ENCODE measurements at regions of chr11 and their contacts with region 1.

Region 1: GRCh38 chr11:57667736-57668435 is at the start of gene ZDHHC5:
- DNase-seq: peak; percentile 99 to 100 (median 100)
- H3K4me3 ChIP-seq: peak within 1 kb of the TSS; percentile 75 to 93
- H3K4me3 Mint-ChIP-seq: peak within 1 kb of the TSS; percentile 88 to 99 (median 96)
- H3K27ac ChIP-seq: peak within 1 kb of the TSS; percentile 91
- H3K27ac Mint-ChIP-seq: peak within 1 kb of the TSS; percentile 98 to 100 (median 99)
- H3K4me1 ChIP-seq: peaks cover 46% of the 10 kb centered on the region
- H3K4me1 Mint-ChIP-seq: peaks cover 33 to 67% (median 45%) of the 10 kb centered on the region in 4 donors
- H3K27me3 ChIP-seq: no peaks in the 10 kb centered on the region
- H3K27me3 Mint-ChIP-seq: peaks cover 0 to 5% of the 10 kb centered on the region in 2 donors
- total RNA-seq, gene ZDHHC5: 73.2 to 75.8 TPM

Region 2: GRCh38 chr11:57567515-57568329 is 100.2 kb before region 1 on chr11 and contains the start of gene UBE2L6:
- CTCF ChIA-PET with region 1: interaction called, 8 read pairs
- POLR2A ChIA-PET with region 1: interaction called, 5 read pairs
- intact Hi-C with region 1: loop called (anchors 1 kb)
- DNase-seq: peak; percentile 59 to 86 (median 66)
- H3K4me3 ChIP-seq: peak within 1 kb of the TSS; percentile 72 to 81
- H3K4me3 Mint-ChIP-seq: peak within 1 kb of the TSS; percentile 94 to 100 (median 99)
- H3K27ac ChIP-seq: peak within 1 kb of the TSS; percentile 93
- H3K27ac Mint-ChIP-seq: peak within 1 kb of the TSS; percentile 97 to 99 (median 98)
- H3K4me1 ChIP-seq: peaks cover 34% of the 10 kb centered on the region
- H3K4me1 Mint-ChIP-seq: peaks cover 27 to 65% (median 42%) of the 10 kb centered on the region in 4 donors
- H3K27me3 ChIP-seq: no peaks in the 10 kb centered on the region
- H3K27me3 Mint-ChIP-seq: no peaks in the 10 kb centered on the region
- total RNA-seq, gene UBE2L6: 79.7 to 82.9 TPM

Region 3: DNA sequence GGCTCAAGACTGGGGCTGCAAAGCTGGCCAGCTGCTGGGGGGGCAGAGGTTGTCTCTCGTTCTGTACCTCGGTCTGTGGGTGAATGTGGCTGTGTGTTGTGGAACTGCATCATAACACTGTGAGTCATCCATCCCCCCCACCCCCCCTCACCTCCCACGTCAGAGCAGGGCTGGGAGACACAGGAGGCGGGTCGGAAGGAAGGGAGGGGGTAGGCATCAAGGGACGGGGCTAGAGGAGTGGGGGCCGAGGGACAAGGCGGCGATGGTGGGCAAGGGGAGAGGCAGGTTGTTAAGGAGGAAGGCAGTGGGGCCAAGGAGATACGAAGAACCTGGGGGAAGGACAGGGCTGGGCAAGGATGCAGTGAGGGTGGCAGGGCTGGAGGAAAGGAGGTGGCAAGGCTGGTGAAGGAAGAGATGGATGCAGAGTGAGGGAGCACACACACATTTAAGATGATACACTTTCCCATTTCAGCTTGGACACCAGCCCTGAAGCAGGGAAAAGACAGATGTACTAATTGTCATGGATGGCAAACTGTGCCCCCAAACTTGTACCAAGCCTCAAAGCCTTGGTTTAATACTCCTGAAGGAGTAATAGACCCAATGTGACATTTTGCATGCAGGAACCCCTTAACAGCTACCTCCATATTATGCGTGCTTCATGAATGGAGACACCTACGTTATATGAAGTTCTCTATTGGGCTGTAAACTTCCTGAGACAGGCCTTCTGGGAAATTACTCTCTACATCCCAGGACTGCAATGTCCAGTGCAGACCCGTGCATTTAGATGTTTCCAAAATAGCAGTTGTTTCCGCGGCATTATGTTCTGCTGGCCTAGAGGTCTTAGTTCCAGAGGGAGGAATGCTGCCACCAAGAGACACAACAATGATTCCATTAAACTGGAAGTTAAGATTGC is 17.8 kb before region 1 on chr11 and contains the start of gene YPEL4:
- CTCF ChIA-PET with region 1: interaction called, 17 read pairs
- POLR2A ChIA-PET with region 1: interaction called, 33 read pairs
- intact Hi-C with region 1: loop called (anchors 1 kb)
- DNase-seq: peak; percentile 69 to 89 (median 74)
- H3K4me3 ChIP-seq: peak within 1 kb of the TSS; percentile 37 to 55
- H3K4me3 Mint-ChIP-seq: peak within 1 kb of the TSS; percentile 83 to 94 (median 86)
- H3K27ac ChIP-seq: peak within 1 kb of the TSS; percentile 10
- H3K27ac Mint-ChIP-seq: peak within 1 kb of the TSS; percentile 92 to 99 (median 95)
- H3K4me1 ChIP-seq: peaks cover 18% of the 10 kb centered on the region
- H3K4me1 Mint-ChIP-seq: peaks cover 15 to 59% (median 31%) of the 10 kb centered on the region in 4 donors
- H3K27me3 ChIP-seq: peaks cover 37% of the 10 kb centered on the region
- H3K27me3 Mint-ChIP-seq: peaks cover 25 to 39% of the 10 kb centered on the region in 2 donors
- total RNA-seq, gene YPEL4: 11.8 to 12.6 TPM

Region 4: DNA sequence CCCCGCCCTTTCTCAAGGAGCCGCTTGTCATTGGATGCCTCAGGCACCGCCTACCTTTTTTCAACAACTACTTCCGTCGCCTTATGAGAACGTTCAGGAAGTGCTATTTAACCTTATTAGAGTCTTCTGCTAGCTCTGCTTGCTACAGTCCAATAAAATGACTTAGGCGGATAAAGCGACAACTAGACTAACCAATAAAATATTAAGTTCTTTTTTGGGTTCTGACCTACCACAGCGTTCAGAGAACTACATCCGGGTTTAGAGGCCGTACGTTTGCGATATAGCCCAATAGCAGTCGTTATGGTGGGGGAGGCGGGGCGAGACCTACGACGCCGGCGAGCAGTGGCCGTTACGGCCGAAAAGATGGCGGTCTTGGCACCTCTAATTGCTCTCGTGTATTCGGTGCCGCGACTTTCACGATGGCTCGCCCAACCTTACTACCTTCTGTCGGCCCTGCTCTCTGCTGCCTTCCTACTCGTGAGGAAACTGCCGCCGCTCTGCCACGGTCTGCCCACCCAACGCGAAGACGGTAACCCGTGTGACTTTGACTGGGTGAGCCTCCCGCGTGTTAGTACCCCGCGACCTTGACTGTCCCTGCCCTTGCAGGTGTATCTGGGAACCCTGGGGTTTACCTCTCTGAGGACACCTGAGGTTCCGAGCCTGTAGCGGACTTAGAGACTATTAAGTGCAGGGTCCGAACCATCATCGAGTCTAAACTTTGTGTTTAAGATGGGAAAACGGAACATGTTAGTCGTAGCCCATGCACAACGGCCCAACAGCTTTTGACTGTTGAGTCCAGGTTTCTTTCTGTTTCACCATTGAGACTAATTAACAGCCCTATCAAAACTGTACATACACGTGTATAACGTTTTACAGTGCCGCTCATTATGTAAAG is 44.6 kb after region 1 on chr11 and contains the start of gene TMX2:
- CTCF ChIA-PET with region 1: no interaction called
- POLR2A ChIA-PET with region 1: interaction called, 25 read pairs
- intact Hi-C with region 1: loop called (anchors 1 kb)
- DNase-seq: peak; percentile 89 to 97 (median 94)
- H3K4me3 ChIP-seq: peak within 1 kb of the TSS; percentile 92 to 96
- H3K4me3 Mint-ChIP-seq: peak within 1 kb of the TSS; percentile 93 to 99 (median 98)
- H3K27ac ChIP-seq: peak within 1 kb of the TSS; percentile 96
- H3K27ac Mint-ChIP-seq: peak within 1 kb of the TSS; percentile 91 to 99 (median 98)
- H3K4me1 ChIP-seq: peaks cover 34% of the 10 kb centered on the region
- H3K4me1 Mint-ChIP-seq: peaks cover 30 to 64% (median 43%) of the 10 kb centered on the region in 4 donors
- H3K27me3 ChIP-seq: no peaks in the 10 kb centered on the region
- H3K27me3 Mint-ChIP-seq: no peaks in the 10 kb centered on the region
- total RNA-seq, gene TMX2: 63.6 to 67.1 TPM

Region 5: DNA sequence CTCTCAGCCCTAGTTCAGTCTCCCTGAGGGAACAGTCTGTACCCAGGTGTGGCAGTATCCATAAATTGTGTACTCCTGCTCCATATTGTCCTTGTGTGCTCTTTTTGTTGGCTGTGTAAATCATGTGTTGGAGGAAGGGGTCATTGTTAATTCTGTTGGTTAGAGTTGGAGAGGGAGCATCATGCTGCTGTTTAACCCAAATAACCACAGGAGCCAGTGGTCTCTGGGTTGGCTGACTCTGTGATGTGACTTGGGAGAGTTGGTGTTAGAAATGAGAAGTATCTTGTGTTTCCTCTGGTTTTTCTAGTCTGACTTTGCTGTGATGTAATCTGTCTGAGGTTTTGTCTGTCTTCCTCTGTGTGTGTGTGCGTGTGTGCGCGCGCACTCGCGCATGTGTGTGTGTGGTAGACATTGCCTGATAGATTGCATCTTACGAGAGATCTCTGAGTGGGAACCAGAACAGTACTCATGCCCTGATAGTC is 124.2 kb after region 1 on chr11:
- CTCF ChIA-PET with region 1: no interaction called
- POLR2A ChIA-PET with region 1: interaction called, 3 read pairs
- intact Hi-C with region 1: loop called (anchors 2 kb)
- DNase-seq: peak; percentile 84 to 93 (median 88)
- H3K4me3 ChIP-seq: peak overlapping the region in 1 of 2 donors; percentile 23
- H3K4me3 Mint-ChIP-seq: peak overlapping the region; percentile 58 to 87 (median 76)
- H3K27ac ChIP-seq: peak overlapping the region; percentile 61
- H3K27ac Mint-ChIP-seq: peak overlapping the region; percentile 84 to 99 (median 97)
- H3K4me1 ChIP-seq: peaks cover 35% of the 10 kb centered on the region
- H3K4me1 Mint-ChIP-seq: peaks cover 26 to 39% (median 32%) of the 10 kb centered on the region in 4 donors
- H3K27me3 ChIP-seq: no peaks in the 10 kb centered on the region
- H3K27me3 Mint-ChIP-seq: no peaks in the 10 kb centered on the region

Region 6: DNA sequence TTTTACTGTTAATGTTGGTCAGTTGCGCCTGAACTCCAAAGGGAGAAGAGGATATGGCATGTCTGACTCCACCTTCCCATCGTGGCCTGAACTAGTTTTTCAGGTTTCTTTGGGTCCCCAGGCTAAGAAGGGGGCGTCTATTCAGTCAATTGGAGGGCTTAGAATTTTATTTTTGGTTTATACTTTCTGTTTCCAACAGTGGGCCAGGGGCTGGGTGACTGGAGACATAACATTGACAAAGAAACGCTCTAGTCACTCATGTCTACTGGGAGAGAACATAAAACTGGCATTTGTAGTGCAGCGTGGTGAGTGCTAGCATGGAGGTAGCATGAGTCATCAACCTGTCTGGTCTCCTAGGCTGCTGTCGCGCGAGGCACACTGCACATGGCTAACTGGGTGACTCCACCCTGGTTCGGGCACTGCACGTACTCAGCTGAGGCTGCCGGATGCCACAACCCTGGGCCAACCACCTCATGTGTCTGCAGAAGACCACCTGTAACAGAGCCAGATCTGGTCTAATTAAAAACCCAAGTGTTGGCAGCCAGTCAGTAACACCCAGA is 235.8 kb after region 1 on chr11:
- CTCF ChIA-PET with region 1: no interaction called
- POLR2A ChIA-PET with region 1: no interaction called
- intact Hi-C with region 1: no loop called
- DNase-seq: no peak
- H3K4me3 ChIP-seq: no peak overlapping the region
- H3K4me3 Mint-ChIP-seq: no peak overlapping the region
- H3K27ac ChIP-seq: no peak overlapping the region
- H3K27ac Mint-ChIP-seq: no peak overlapping the region
- H3K4me1 ChIP-seq: no peaks in the 10 kb centered on the region
- H3K4me1 Mint-ChIP-seq: no peaks in the 10 kb centered on the region
- H3K27me3 ChIP-seq: no peaks in the 10 kb centered on the region
- H3K27me3 Mint-ChIP-seq: peaks cover 7 to 14% of the 10 kb centered on the region in 2 donors

Region 7: GRCh38 chr11:59615637-59616395 is 1947.9 kb after region 1 on chr11 and contains the start of gene OSBP:
- CTCF ChIA-PET with region 1: no interaction called
- POLR2A ChIA-PET with region 1: interaction called, 3 read pairs
- intact Hi-C with region 1: loop called (anchors 5 kb)
- DNase-seq: peak; percentile 98 to 100 (median 100)
- H3K4me3 ChIP-seq: peak within 1 kb of the TSS; percentile 84 to 86
- H3K4me3 Mint-ChIP-seq: peak within 1 kb of the TSS; percentile 93 to 99 (median 96)
- H3K27ac ChIP-seq: peak within 1 kb of the TSS; percentile 95
- H3K27ac Mint-ChIP-seq: peak within 1 kb of the TSS; percentile 83 to 99 (median 98)
- H3K4me1 ChIP-seq: peaks cover 48% of the 10 kb centered on the region
- H3K4me1 Mint-ChIP-seq: peaks cover 29 to 53% (median 42%) of the 10 kb centered on the region in 4 donors
- H3K27me3 ChIP-seq: no peaks in the 10 kb centered on the region
- H3K27me3 Mint-ChIP-seq: no peaks in the 10 kb centered on the region
- total RNA-seq, gene OSBP: 55.3 to 55.6 TPM

Measured in CD4-positive, alpha-beta memory T cell (primary cell).